Left cardiac atrium (tissue), 4 donors: ENCODE measurements at regions of chr10 and their contacts with region 1.

Region 1: GRCh38 chr10:33460505-33461294 is 126.2 kb upstream of the NRP1 start:
- DNase-seq: peak; percentile 52
- ATAC-seq: peak; percentile 91 to 95

Region 2: GRCh38 chr10:33376976-33377657 is 83.6 kb before region 1 on chr10:
- intact Hi-C with region 1: loop called in 1 of 2 experiments (anchors 10 kb)
- DNase-seq: no peak
- ATAC-seq: no peak